Caco-2 (cell line): ENCODE measurements at regions of chr11 and their contacts with region 1.

Region 1: DNA sequence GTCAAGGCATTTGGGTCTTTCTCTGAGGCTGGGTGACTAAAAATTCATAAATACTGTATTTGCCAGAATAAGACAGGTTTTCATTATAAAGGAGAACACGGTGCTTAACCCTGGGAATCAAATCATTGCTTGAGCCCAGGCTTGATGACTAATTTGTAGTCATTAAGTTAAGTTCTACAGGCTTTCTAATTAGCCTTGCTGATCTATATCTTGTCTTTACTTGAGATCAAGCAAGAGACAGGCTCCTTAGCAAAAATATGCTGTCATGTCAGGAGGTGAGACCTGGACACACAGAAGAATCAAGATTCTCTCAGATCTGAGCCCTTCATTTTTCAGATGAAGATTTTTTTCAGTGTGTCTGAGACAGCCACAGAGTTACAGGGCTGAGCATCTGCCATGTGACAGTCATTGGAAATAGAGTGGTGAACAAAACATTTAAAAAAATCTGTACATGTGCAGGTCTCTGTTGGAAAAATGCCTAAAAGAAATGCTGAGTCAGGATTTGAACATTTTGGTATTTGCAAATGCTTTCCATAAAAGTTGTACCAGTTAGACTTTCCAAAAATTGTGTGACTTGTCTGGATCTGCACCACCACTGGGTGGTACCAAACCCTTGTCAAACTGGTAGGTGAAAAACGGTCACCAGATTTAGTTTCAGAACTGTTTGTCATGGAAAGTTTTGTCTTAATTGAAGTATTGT is 14.6 kb downstream of the ACAT1 start:
- DNase-seq: peak in 1 of 2 experiments; percentile 21
- H3K4me3 ChIP-seq: no peak overlapping the region
- H3K4me3 Mint-ChIP-seq: no peak overlapping the region
- H3K27ac Mint-ChIP-seq: no peak overlapping the region
- H3K4me1 ChIP-seq: no peaks in the 10 kb centered on the region
- H3K4me1 Mint-ChIP-seq: no peaks in the 10 kb centered on the region
- H3K27me3 ChIP-seq: no peaks in the 10 kb centered on the region
- H3K27me3 Mint-ChIP-seq: no peaks in the 10 kb centered on the region
- CTCF ChIP-seq: peak in 1 of 2 experiments; percentile 37

Region 2: DNA sequence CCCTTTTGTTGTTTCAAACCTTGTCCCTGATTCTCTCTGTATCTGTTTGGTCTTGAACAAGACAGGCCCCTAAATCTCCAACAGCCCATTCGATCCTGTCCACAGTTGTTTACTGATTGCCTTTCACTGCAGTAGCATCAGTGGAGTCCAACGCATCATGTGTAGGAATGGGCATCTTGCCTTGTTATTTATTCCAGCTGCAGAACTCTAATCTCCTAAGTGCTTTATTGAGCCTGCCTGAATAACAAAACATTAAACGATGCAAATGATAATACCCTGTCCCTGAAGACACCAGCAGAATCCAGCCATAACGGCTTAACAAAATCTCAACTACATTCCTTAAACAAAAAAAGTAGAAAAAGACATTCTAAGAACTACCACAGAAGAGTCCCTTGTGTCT is 327.5 kb before region 1 on chr11:
- CTCF ChIA-PET with region 1: no interaction called
- POLR2A ChIA-PET with region 1: interaction called, 10 read pairs
- intact Hi-C with region 1: no loop called
- DNase-seq: no peak
- H3K4me3 ChIP-seq: no peak overlapping the region
- H3K4me3 Mint-ChIP-seq: no peak overlapping the region
- H3K27ac Mint-ChIP-seq: no peak overlapping the region
- H3K4me1 ChIP-seq: peaks cover 12% of the 10 kb centered on the region
- H3K4me1 Mint-ChIP-seq: no peaks in the 10 kb centered on the region
- H3K27me3 ChIP-seq: no peaks in the 10 kb centered on the region
- H3K27me3 Mint-ChIP-seq: no peaks in the 10 kb centered on the region
- CTCF ChIP-seq: no peak